ENCODE measurements at regions of chr3 and their contacts with region 1.

Region 1: GRCh38 chr3:71438071-71438685 is 145.3 kb downstream of the FOXP1 start:
- DNase-seq: no peak
- H3K4me3 ChIP-seq: no peak overlapping the region
- H3K4me3 Mint-ChIP-seq: peak overlapping the region in 5 of 7 donors; percentile 19 to 59 (median 28)
- H3K27ac ChIP-seq: no peak overlapping the region
- H3K27ac Mint-ChIP-seq: peak overlapping the region; percentile 72 to 98 (median 93)
- H3K4me1 ChIP-seq: peaks cover 91% of the 10 kb centered on the region
- H3K4me1 Mint-ChIP-seq: peaks cover 85 to 93% (median 92%) of the 10 kb centered on the region in 3 donors
- H3K27me3 ChIP-seq: no peaks in the 10 kb centered on the region
- H3K27me3 Mint-ChIP-seq: no peaks in the 10 kb centered on the region

Region 2: GRCh38 chr3:71453822-71454511 is 15.8 kb after region 1 on chr3:
- CTCF ChIA-PET with region 1: interaction called, 10 read pairs
- POLR2A ChIA-PET with region 1: interaction called, 7 read pairs
- DNase-seq: peak in 2 of 5 donors; percentile 20 to 61
- H3K4me3 ChIP-seq: peak overlapping the region; percentile 58
- H3K4me3 Mint-ChIP-seq: peak overlapping the region; percentile 63 to 88 (median 78)
- H3K27ac ChIP-seq: peak overlapping the region; percentile 14
- H3K27ac Mint-ChIP-seq: peak overlapping the region; percentile 86 to 97 (median 93)
- H3K4me1 ChIP-seq: peaks cover 100% of the 10 kb centered on the region
- H3K4me1 Mint-ChIP-seq: peaks cover 91 to 100% (median 100%) of the 10 kb centered on the region in 3 donors
- H3K27me3 ChIP-seq: no peaks in the 10 kb centered on the region
- H3K27me3 Mint-ChIP-seq: no peaks in the 10 kb centered on the region